ENCODE measurements at regions of chr17 and their contacts with region 1.

Region 1: GRCh38 chr17:3695723-3696411 is at the start of gene P2RX5:
- DNase-seq: no peak
- H3K4me3 ChIP-seq: peak within 1 kb of the TSS; percentile 38
- H3K4me3 Mint-ChIP-seq: peak within 1 kb of the TSS; percentile 66
- H3K27ac Mint-ChIP-seq: no peak within 1 kb of the TSS
- H3K4me1 ChIP-seq: no peaks in the 10 kb centered on the region
- H3K4me1 Mint-ChIP-seq: no peaks in the 10 kb centered on the region
- H3K27me3 ChIP-seq: no peaks in the 10 kb centered on the region
- H3K27me3 Mint-ChIP-seq: no peaks in the 10 kb centered on the region
- CTCF ChIP-seq: no peak
- total RNA-seq, gene P2RX5: 0.66 and 1.4 TPM in 2 replicates

Region 2: GRCh38 chr17:3744032-3744431 is 48.2 kb after region 1 on chr17:
- CTCF ChIA-PET with region 1: no interaction called
- POLR2A ChIA-PET with region 1: interaction called, 10 read pairs
- intact Hi-C with region 1: no loop called
- DNase-seq: no peak
- H3K4me3 ChIP-seq: no peak overlapping the region
- H3K4me3 Mint-ChIP-seq: no peak overlapping the region
- H3K27ac Mint-ChIP-seq: no peak overlapping the region
- H3K4me1 ChIP-seq: no peaks in the 10 kb centered on the region
- H3K4me1 Mint-ChIP-seq: peaks cover 5% of the 10 kb centered on the region
- H3K27me3 ChIP-seq: no peaks in the 10 kb centered on the region
- H3K27me3 Mint-ChIP-seq: no peaks in the 10 kb centered on the region
- CTCF ChIP-seq: no peak

Measured in Caco-2 (cell line).